ENCODE measurements at regions of chr2 and their contacts with region 1.

Region 1: DNA sequence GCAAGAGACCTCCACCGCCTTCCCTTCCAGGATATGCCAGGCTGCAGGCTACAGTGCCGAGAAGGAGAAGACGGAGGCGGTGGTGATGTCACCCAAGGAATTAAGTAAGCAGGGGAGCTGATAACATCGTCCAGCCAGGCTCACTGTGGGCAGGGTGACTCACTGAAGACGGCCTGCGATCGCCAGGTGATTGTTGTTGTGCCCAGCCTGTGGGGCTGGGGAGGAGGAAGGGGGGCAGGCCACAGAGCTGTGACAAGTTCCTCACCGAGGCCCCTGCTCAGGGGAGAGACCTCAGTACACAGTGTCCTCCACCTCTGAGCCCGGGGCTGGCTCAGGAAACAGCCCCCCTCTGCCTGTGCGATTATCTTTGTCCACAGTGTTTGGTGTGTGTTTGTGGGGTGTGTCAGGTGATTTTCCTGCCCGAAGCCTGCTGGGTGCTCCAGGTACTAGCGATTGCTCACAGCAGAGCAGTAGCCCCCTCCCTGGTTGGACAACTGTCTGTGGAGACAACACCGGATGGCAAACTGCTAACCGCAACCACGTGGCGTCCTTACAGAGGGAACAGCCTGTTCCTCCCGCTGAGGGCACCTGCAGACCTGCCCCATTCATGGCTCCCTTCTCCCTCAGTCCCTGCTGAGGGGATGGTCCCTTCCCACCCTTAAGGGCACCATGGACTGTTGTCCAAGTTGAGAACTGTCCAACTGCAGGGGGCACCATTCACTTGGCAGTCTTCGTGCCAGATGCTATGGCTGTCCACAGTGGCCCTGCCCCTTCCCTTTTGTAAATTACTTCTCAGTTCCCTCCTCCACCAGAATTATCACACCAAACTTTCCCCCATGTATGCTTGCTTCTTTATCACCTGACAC is 95.1 kb downstream of the ZFP36L2 start:
- DNase-seq: peak; percentile 80
- ATAC-seq: peak; percentile 68
- H3K4me3 ChIP-seq: peak overlapping the region in 1 of 3 experiments; percentile 34; a peak in 2 of 6 replicates
- H3K27ac ChIP-seq: peak overlapping the region; percentile 11
- H3K4me1 ChIP-seq: peaks cover 86% of the 10 kb centered on the region
- H3K27me3 ChIP-seq: no peaks in the 10 kb centered on the region
- CTCF ChIP-seq: peak; percentile 96
- EP300 ChIP-seq: peak in 1 of 2 experiments; percentile 15; a peak in 1 of 4 replicates
- POLR2A ChIP-seq: no peak
- RAD21 ChIP-seq: peak; percentile 97

Region 2: DNA sequence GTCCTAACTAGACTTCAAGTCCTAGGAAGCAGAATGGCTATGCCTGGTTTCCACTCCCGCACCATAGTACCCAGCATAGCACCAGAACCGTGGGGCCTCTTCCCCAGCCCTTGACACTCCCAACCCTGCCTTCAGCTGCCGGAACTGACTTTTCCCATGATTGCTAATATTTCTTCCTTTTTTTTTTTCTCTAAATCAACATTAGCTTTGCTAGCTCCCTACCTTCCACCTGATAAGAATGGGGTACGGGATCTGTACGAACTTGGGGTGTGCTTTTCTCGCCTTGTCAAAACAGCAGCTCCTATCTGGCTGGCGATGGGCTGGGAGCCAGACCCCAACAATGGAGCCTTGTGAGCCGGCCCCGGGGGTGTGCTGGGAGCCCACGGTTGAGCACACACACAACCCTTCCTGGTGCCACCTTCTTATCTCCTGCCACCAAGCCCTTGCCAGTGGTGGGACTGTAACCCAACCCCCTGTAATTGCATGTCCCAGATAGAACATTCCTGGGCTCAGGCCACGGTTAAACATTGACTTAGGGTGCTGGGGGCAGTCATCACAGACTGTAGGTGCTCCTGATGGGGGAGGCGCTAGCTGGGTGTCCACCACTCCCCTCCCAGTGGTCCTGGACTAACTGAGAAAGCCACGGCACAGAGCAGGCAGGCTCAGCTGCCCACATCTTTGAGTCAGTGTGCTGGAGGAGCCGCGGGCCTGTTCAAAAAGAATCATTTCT is 125.8 kb before region 1 on chr2:
- CTCF ChIA-PET with region 1: no interaction called
- POLR2A ChIA-PET with region 1: no interaction called
- in situ Hi-C with region 1: no loop called
- intact Hi-C with region 1: no loop called
- DNase-seq: peak; percentile 99
- ATAC-seq: peak; percentile 96
- H3K4me3 ChIP-seq: peak overlapping the region; percentile 27 to 67 (median 39); a peak in 5 of 6 replicates
- H3K27ac ChIP-seq: peak overlapping the region; percentile 75
- H3K4me1 ChIP-seq: peaks cover 85% of the 10 kb centered on the region
- H3K27me3 ChIP-seq: no peaks in the 10 kb centered on the region
- CTCF ChIP-seq: peak; percentile 54
- EP300 ChIP-seq: peak in 1 of 2 experiments; percentile 90; a peak in 2 of 4 replicates
- POLR2A ChIP-seq: peak; percentile 36 to 92; a peak in 3 of 4 replicates
- RAD21 ChIP-seq: no peak

Region 3: DNA sequence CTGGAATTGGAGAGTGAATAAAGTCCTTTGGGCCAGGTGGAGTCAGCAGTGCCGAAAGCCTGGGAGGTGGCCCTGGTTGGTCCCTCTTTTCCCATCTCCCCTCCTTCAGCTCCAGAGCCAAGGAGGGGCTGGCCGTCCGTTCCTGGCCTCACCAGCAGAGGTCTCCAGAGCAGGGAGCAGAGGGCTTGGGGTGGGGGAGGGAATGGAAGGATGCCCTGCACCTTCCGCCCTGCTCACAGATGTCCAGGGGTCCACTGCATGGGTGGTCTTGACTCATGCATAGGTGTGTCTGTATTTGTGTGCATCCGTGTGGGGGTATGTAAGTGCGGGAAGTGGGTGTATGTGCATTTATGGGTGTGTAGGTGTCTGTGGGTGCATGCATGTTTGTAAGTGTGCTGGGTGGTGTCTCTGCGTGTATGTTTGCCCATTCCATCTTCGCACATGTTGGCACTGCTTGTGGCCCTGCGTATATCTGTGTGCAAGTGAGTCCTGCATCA is 106.7 kb before region 1 on chr2:
- CTCF ChIA-PET with region 1: interaction called, 6 read pairs
- POLR2A ChIA-PET with region 1: no interaction called
- in situ Hi-C with region 1: no loop called
- intact Hi-C with region 1: loop called (anchors 5 kb)
- DNase-seq: no peak
- ATAC-seq: peak; percentile 83
- H3K4me3 ChIP-seq: no peak overlapping the region
- H3K27ac ChIP-seq: no peak overlapping the region
- H3K4me1 ChIP-seq: peaks cover 60% of the 10 kb centered on the region
- H3K27me3 ChIP-seq: no peaks in the 10 kb centered on the region
- CTCF ChIP-seq: peak; percentile 98
- EP300 ChIP-seq: peak in 1 of 2 experiments; percentile 19; a peak in 1 of 4 replicates
- POLR2A ChIP-seq: no peak
- RAD21 ChIP-seq: peak; percentile 94

Region 4: GRCh38 chr2:43293744-43294695 is 162.8 kb after region 1 on chr2:
- CTCF ChIA-PET with region 1: no interaction called
- POLR2A ChIA-PET with region 1: no interaction called
- in situ Hi-C with region 1: no loop called
- intact Hi-C with region 1: no loop called
- DNase-seq: peak; percentile 99
- ATAC-seq: peak; percentile 95
- H3K4me3 ChIP-seq: peak overlapping the region in 1 of 3 experiments; percentile 6; a peak in 1 of 6 replicates
- H3K27ac ChIP-seq: peak overlapping the region; percentile 82
- H3K4me1 ChIP-seq: peaks cover 61% of the 10 kb centered on the region
- H3K27me3 ChIP-seq: no peaks in the 10 kb centered on the region
- CTCF ChIP-seq: peak; percentile 23; the same call in 1 of the 2 replicates
- EP300 ChIP-seq: peak; percentile 91 to 98
- POLR2A ChIP-seq: peak in 1 of 2 experiments; percentile 35; a peak in 1 of 4 replicates
- RAD21 ChIP-seq: peak; percentile 48

Region 5: DNA sequence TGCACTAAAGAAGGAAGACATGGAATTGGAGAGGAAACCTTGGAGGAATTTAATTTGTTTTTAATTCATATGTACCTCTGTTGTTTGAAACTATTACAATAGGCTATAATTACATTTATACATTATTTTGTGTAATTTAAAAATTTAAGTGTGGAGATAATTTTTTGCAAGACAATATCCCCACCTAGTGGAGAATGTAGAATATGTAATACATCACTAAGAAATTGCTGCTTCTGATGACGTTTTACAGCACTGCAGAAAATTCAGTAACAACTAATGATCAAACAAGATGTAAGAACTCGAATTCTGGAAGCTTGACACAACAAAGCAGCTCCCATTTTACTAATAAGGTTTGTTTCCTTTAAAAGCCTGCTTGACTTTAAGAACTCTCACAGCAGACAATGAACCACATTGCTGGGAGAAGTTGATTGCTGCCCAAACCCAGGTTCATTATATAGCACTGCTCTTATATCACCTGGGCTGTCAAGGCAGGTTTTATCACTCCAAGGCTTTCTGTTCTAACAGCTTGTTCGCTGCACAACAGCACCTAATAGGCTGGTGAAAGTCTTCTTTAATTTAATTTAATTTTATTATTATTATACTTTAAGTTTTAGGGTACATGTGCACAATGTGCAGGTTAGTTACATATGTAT is 411.2 kb after region 1 on chr2:
- CTCF ChIA-PET with region 1: interaction called, 6 read pairs
- POLR2A ChIA-PET with region 1: no interaction called
- in situ Hi-C with region 1: no loop called
- intact Hi-C with region 1: loop called (anchors 1 kb)
- DNase-seq: peak; percentile 54
- ATAC-seq: no peak
- H3K4me3 ChIP-seq: no peak overlapping the region
- H3K27ac ChIP-seq: no peak overlapping the region
- H3K4me1 ChIP-seq: peaks cover 11% of the 10 kb centered on the region
- H3K27me3 ChIP-seq: no peaks in the 10 kb centered on the region
- CTCF ChIP-seq: peak; percentile 67
- EP300 ChIP-seq: no peak
- POLR2A ChIP-seq: no peak
- RAD21 ChIP-seq: 0 out of 2 replicates have a peak, but pooled peaks have one; percentile 23